Naive thymus-derived CD4-positive, alpha-beta T cell (primary cell): ENCODE measurements at regions of chr11 and their contacts with region 1.

Region 1: GRCh38 chr11:74232311-74232950 is 61.3 kb downstream of the PPME1 start:
- DNase-seq: peak in 7 of 9 donors; percentile 24 to 79 (median 68)
- ATAC-seq: peak; percentile 95
- H3K4me3 ChIP-seq: peak overlapping the region; percentile 5
- H3K4me3 Mint-ChIP-seq: peak overlapping the region in 8 of 10 donors; percentile 10 to 71 (median 40)
- H3K27ac ChIP-seq: peak overlapping the region; percentile 69
- H3K27ac Mint-ChIP-seq: peak overlapping the region in 2 of 9 donors; percentile 95 to 96
- H3K4me1 ChIP-seq: peaks cover 22 to 35% of the 10 kb centered on the region in 2 donors
- H3K4me1 Mint-ChIP-seq: peaks cover 7 to 46% (median 26%) of the 10 kb centered on the region in 7 donors
- H3K27me3 ChIP-seq: no peaks in the 10 kb centered on the region
- H3K27me3 Mint-ChIP-seq: no peaks in the 10 kb centered on the region

Region 2: GRCh38 chr11:74220376-74220775 is 12.1 kb before region 1 on chr11:
- CTCF ChIA-PET with region 1: no interaction called
- POLR2A ChIA-PET with region 1: interaction called, 3 read pairs
- intact Hi-C with region 1: loop called in 1 of 2 experiments (anchors 1 kb)
- DNase-seq: no peak
- ATAC-seq: no peak
- H3K4me3 ChIP-seq: no peak overlapping the region
- H3K4me3 Mint-ChIP-seq: no peak overlapping the region
- H3K27ac ChIP-seq: no peak overlapping the region
- H3K27ac Mint-ChIP-seq: peak overlapping the region in 3 of 9 donors; percentile 13 to 76 (median 40)
- H3K4me1 ChIP-seq: no peaks in the 10 kb centered on the region
- H3K4me1 Mint-ChIP-seq: peaks cover 0 to 2% (median 0%) of the 10 kb centered on the region in 7 donors
- H3K27me3 ChIP-seq: no peaks in the 10 kb centered on the region
- H3K27me3 Mint-ChIP-seq: no peaks in the 10 kb centered on the region